ENCODE measurements at regions of chr6 and their contacts with region 1.

Region 1: DNA sequence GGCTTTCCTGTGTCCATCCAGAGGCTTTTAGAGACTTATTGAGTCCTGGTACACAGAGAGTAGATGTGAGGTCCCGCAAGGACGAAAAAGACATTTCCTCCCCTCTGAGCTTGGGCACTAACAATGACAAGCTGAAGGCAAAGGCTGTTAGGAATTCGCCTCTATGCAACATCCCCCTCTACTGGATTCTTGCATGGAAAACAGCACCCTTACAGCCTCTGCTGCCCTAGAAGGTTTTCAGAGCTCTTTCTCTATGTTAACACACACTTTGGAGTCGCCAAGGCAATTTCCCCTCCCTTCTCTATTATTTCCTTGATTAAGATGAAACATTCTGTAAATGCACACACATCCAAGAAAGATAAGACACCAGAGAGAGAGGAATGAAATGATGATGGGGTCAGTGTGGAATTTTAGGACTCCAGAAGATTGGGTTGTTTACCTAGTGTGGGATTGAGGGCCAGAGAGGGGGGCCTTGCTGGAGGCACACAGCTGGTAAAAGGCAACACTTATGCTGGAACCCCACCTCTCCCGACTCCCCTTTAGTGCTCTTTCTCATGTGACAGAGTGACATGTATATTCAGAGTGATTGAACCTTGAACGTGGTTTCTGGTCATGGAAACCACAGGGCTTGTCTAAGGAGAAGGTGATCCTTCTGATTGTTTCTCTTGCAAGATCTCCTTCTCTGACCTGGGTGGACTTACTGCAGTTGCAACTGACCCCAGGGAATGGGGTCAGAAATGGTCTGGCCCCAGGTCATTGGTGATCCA is 300.7 kb downstream of the CLIC5 start:
- DNase-seq: peak; percentile 89
- ATAC-seq: peak; percentile 92
- H3K4me3 ChIP-seq: no peak overlapping the region
- H3K27ac ChIP-seq: peak overlapping the region; percentile 62
- H3K4me1 ChIP-seq: peaks cover 34% of the 10 kb centered on the region
- H3K27me3 ChIP-seq: no peaks in the 10 kb centered on the region
- CTCF ChIP-seq: peak; percentile 94

Region 2: GRCh38 chr6:44655412-44656342 is 1059.2 kb before region 1 on chr6:
- CTCF ChIA-PET with region 1: no interaction called
- POLR2A ChIA-PET with region 1: no interaction called
- intact Hi-C with region 1: loop called (anchors 10 kb)
- DNase-seq: peak; percentile 58
- ATAC-seq: peak; percentile 75
- H3K4me3 ChIP-seq: peak overlapping the region; percentile 11; the same call in 1 of the 2 replicates
- H3K27ac ChIP-seq: no peak overlapping the region
- H3K4me1 ChIP-seq: peaks cover 6% of the 10 kb centered on the region
- H3K27me3 ChIP-seq: no peaks in the 10 kb centered on the region
- CTCF ChIP-seq: peak; percentile 97

Region 3: DNA sequence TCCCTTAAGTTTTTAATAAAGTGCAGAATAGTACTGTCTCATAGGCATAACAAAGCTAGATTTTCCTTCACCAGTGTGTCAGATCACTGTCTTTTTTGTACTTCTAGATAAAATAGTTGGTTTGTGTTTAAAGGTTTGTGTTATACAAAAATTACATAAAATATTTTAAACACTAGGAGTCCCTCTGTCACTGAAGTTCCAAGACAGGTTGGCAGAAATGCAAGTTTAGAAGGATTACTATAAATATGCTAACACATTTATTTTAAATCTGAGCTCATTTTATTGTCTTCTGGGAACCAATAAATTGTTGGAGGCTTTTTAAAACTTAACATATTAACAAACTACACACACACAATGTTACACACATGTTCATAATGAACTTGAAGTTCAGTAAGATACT is 417.6 kb before region 1 on chr6:
- CTCF ChIA-PET with region 1: no interaction called
- POLR2A ChIA-PET with region 1: no interaction called
- intact Hi-C with region 1: loop called (anchors 1 kb)
- DNase-seq: no peak
- ATAC-seq: peak; percentile 54
- H3K4me3 ChIP-seq: no peak overlapping the region
- H3K27ac ChIP-seq: no peak overlapping the region
- H3K4me1 ChIP-seq: no peaks in the 10 kb centered on the region
- H3K27me3 ChIP-seq: no peaks in the 10 kb centered on the region
- CTCF ChIP-seq: 0 out of 2 replicates have a peak, but pooled peaks have one; percentile 13

Region 4: DNA sequence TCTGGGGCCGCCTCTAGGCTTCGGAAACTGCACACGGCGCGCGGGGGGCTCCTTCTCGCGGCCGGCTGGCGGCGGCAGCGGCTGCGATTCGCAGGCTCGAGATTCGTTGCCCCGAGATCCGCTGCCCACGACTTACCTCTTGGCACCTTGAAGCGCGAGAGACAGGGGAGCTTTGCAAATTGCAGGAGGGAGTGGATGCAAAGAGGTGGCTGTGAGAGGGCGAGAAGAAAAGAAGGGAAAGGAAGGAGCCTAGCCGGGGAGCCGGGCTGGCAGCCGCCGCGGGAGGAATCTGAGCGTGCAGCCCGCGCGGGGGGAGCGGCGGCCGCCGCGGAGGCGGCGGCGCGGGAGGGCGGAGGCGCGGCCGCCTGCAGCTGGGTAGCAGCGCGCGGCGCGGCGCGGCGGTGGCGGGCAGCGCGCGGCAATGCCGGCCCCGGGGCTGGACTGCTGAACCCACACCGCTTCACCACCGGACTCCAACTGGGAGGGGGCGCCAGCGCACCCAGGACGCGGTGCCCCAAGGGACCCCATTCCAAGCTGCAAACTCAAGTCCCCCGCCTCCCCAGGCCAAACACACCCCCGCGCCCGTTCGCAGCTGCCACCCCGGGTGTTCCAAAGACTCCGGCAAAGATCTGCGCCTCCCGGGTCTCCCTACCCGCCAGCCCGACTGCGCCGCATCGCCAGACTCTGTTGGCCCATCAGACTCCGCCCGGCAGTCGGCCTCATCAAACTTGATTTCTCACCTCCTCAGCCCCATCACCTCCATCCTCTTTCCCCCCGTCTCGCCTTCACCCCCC is 293.0 kb before region 1 on chr6:
- CTCF ChIA-PET with region 1: interaction called, 8 read pairs
- POLR2A ChIA-PET with region 1: interaction called, 4 read pairs
- intact Hi-C with region 1: loop called (anchors 1 kb)
- DNase-seq: peak; percentile 72
- ATAC-seq: peak; percentile 58
- H3K4me3 ChIP-seq: peak overlapping the region; percentile 93
- H3K27ac ChIP-seq: peak overlapping the region; percentile 73
- H3K4me1 ChIP-seq: peaks cover 33% of the 10 kb centered on the region
- H3K27me3 ChIP-seq: no peaks in the 10 kb centered on the region
- CTCF ChIP-seq: peak; percentile 37

Region 5: GRCh38 chr6:45590225-45590624 is 124.7 kb before region 1 on chr6:
- CTCF ChIA-PET with region 1: interaction called, 4 read pairs
- POLR2A ChIA-PET with region 1: no interaction called
- intact Hi-C with region 1: loop called (anchors 1 kb)
- DNase-seq: peak; percentile 93
- ATAC-seq: peak; percentile 93
- H3K4me3 ChIP-seq: no peak overlapping the region
- H3K27ac ChIP-seq: peak overlapping the region; percentile 97
- H3K4me1 ChIP-seq: peaks cover 68% of the 10 kb centered on the region
- H3K27me3 ChIP-seq: no peaks in the 10 kb centered on the region
- CTCF ChIP-seq: no peak

Region 6: GRCh38 chr6:45655630-45656422 is 59.1 kb before region 1 on chr6:
- CTCF ChIA-PET with region 1: interaction called, 5 read pairs
- POLR2A ChIA-PET with region 1: no interaction called
- intact Hi-C with region 1: loop called (anchors 1 kb)
- DNase-seq: peak; percentile 98
- ATAC-seq: peak; percentile 91
- H3K4me3 ChIP-seq: peak overlapping the region; percentile 3; the same call in 1 of the 2 replicates
- H3K27ac ChIP-seq: peak overlapping the region; percentile 98
- H3K4me1 ChIP-seq: peaks cover 72% of the 10 kb centered on the region
- H3K27me3 ChIP-seq: no peaks in the 10 kb centered on the region
- CTCF ChIP-seq: no peak

Region 7: DNA sequence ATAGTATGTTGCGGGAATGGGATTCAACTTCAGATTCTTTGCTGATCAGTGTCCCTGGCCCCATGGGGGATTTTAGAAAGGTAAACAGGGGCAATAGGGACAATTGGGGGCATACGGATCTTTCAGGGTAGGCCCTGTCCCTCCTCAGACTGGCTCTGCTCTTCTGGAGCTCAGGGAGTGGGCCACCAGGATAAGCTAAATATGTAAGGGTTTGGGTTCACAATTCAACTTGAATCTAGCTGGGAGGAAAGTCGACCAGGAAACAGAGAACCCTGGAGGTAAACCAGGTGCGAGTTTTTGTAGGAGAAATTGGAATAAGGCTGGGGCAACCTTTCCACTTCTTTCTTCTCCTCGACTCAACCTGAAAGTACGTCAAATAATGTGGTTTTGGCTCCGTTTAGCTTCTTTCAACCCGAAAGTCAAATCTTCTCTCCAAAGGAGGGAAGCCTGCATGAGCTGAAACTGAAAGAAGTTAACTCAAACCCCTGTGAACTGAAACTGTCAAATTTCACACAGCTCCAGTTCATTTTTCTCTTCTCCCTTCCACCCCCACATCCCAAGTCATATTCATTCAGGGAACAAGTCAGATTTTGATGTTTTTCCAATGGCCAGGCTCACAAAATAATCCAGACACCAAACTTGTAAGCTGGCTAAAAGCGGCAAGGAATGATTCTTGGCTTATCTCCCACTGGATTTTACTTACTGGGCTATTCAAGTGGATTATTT is 22.6 kb after region 1 on chr6:
- CTCF ChIA-PET with region 1: no interaction called
- POLR2A ChIA-PET with region 1: no interaction called
- intact Hi-C with region 1: no loop called
- DNase-seq: no peak
- ATAC-seq: no peak
- H3K4me3 ChIP-seq: no peak overlapping the region
- H3K27ac ChIP-seq: no peak overlapping the region
- H3K4me1 ChIP-seq: no peaks in the 10 kb centered on the region
- H3K27me3 ChIP-seq: no peaks in the 10 kb centered on the region; the same call in 1 of the 2 replicates
- CTCF ChIP-seq: no peak

Region 8: GRCh38 chr6:45772886-45773495 is 58.1 kb after region 1 on chr6:
- CTCF ChIA-PET with region 1: no interaction called
- POLR2A ChIA-PET with region 1: no interaction called
- intact Hi-C with region 1: no loop called
- DNase-seq: no peak
- ATAC-seq: no peak
- H3K4me3 ChIP-seq: no peak overlapping the region
- H3K27ac ChIP-seq: no peak overlapping the region
- H3K4me1 ChIP-seq: no peaks in the 10 kb centered on the region
- H3K27me3 ChIP-seq: no peaks in the 10 kb centered on the region; the same call in 1 of the 2 replicates
- CTCF ChIP-seq: no peak